ENCODE measurements at regions of chr10 and their contacts with region 1.

Region 1: DNA sequence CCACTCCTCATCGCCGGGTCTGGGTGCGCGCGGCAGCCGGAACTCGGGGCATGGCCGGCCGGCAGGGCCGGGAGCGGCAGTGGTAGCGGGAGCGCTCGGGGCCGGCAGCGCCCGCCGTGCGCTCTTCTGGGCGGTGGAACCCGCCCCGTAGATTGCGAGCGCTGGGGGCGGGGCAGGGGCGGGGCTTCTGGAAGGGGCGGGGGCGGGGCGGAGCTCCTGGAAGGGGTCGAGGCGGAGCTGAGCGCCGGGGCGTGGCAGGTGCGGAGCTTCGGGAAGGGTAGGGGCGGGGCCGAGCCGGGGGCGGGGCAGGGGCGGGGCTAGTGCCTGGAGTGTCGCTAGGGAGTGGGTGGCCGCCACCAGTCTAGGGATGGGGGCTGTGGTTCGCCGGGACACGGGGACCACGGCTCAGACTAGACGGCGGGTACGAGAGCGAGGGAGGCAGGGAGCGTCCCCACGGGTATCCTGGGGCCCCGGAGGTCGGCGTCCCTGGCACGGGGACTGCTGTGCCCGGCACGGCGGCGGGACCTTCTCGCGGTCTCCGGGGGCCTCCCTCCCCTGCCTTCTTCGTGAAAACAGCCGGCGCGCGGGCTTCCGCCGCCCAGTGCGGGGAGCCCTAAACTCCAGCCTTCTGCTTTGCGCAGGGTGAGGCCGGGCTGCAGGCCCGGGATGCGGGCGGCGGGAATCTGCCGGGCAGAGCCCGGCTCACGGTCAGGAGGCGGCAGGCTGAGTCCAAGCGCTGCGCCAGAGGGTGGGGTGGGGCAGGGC is at the start of gene STK32C:
- DNase-seq: peak; percentile 82 to 94 (median 90)
- ATAC-seq: peak; percentile 90
- H3K4me3 ChIP-seq: peak within 1 kb of the TSS; percentile 65 to 74
- H3K4me3 Mint-ChIP-seq: peak within 1 kb of the TSS; percentile 87
- H3K27ac ChIP-seq: peak within 1 kb of the TSS; percentile 43 to 50
- H3K27ac Mint-ChIP-seq: peak within 1 kb of the TSS; percentile 60
- H3K4me1 ChIP-seq: peaks cover 13% of the 10 kb centered on the region
- H3K4me1 Mint-ChIP-seq: peaks cover 17% of the 10 kb centered on the region
- H3K27me3 ChIP-seq: peaks cover 0 to 2% of the 10 kb centered on the region in 2 experiments
- H3K27me3 Mint-ChIP-seq: no peaks in the 10 kb centered on the region
- CTCF ChIP-seq: no peak
- total RNA-seq, gene STK32C: 5.0 to 5.4 TPM

Region 2: DNA sequence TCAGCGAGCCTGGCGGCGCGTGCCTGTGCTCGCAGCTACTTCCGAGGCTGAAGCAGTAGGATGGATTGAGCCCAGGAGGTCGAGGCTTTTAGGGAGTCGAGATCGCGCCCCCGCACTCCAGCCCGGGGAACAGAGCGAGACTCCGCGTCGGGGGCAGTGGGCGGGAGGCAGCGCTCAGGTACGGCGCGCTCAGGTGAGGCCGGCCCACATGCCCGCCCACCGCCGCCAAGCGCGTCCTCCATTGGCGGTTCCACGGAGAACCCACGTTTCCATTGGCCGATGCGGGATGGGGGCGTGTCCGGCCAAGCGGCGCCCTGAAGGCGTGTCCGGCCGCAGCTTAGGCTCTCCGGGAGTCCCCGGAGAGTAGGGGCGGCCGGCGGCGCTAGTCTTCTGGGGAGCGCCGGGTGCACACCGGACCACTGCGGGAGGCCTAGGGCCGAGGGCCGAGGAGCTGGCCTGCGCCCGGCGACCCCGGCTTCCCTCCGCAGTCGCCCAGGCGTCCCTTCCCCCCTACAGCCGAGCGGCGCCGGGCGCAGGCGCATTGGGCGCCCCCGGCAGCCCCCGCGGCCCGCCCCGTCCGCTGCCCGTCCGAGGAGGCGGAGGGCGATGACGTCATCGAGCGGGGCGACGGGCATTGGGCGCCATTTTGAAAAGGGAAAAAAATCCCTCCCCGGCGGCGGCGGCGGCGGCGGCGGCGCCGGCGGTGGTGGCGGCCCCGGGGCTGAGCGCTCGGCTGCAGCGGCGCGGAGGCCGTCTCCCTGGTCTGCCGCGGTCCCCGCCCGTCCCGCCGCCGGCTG is 407.5 kb before region 1 on chr10 and contains the start of gene PPP2R2D:
- CTCF ChIA-PET with region 1: no interaction called
- POLR2A ChIA-PET with region 1: no interaction called
- intact Hi-C with region 1: loop called in 1 of 2 experiments (anchors 5 kb)
- DNase-seq: peak; percentile 91 to 97 (median 95)
- ATAC-seq: peak; percentile 83
- H3K4me3 ChIP-seq: peak within 1 kb of the TSS; percentile 65 to 76
- H3K4me3 Mint-ChIP-seq: peak within 1 kb of the TSS; percentile 87
- H3K27ac ChIP-seq: peak within 1 kb of the TSS; percentile 73 to 79
- H3K27ac Mint-ChIP-seq: peak within 1 kb of the TSS; percentile 88
- H3K4me1 ChIP-seq: peaks cover 56% of the 10 kb centered on the region
- H3K4me1 Mint-ChIP-seq: peaks cover 52% of the 10 kb centered on the region
- H3K27me3 ChIP-seq: no peaks in the 10 kb centered on the region
- H3K27me3 Mint-ChIP-seq: no peaks in the 10 kb centered on the region
- CTCF ChIP-seq: no peak
- total RNA-seq, gene PPP2R2D: 28.4 to 28.5 TPM

Region 3: GRCh38 chr10:131961777-131962662 is 346.0 kb before region 1 on chr10:
- CTCF ChIA-PET with region 1: no interaction called
- POLR2A ChIA-PET with region 1: no interaction called
- intact Hi-C with region 1: no loop called
- DNase-seq: no peak
- ATAC-seq: no peak
- H3K4me3 ChIP-seq: no peak overlapping the region
- H3K4me3 Mint-ChIP-seq: no peak overlapping the region
- H3K27ac ChIP-seq: no peak overlapping the region
- H3K27ac Mint-ChIP-seq: no peak overlapping the region
- H3K4me1 ChIP-seq: peaks cover 18% of the 10 kb centered on the region
- H3K4me1 Mint-ChIP-seq: peaks cover 23% of the 10 kb centered on the region
- H3K27me3 ChIP-seq: no peaks in the 10 kb centered on the region
- H3K27me3 Mint-ChIP-seq: no peaks in the 10 kb centered on the region
- CTCF ChIP-seq: no peak

Region 4: DNA sequence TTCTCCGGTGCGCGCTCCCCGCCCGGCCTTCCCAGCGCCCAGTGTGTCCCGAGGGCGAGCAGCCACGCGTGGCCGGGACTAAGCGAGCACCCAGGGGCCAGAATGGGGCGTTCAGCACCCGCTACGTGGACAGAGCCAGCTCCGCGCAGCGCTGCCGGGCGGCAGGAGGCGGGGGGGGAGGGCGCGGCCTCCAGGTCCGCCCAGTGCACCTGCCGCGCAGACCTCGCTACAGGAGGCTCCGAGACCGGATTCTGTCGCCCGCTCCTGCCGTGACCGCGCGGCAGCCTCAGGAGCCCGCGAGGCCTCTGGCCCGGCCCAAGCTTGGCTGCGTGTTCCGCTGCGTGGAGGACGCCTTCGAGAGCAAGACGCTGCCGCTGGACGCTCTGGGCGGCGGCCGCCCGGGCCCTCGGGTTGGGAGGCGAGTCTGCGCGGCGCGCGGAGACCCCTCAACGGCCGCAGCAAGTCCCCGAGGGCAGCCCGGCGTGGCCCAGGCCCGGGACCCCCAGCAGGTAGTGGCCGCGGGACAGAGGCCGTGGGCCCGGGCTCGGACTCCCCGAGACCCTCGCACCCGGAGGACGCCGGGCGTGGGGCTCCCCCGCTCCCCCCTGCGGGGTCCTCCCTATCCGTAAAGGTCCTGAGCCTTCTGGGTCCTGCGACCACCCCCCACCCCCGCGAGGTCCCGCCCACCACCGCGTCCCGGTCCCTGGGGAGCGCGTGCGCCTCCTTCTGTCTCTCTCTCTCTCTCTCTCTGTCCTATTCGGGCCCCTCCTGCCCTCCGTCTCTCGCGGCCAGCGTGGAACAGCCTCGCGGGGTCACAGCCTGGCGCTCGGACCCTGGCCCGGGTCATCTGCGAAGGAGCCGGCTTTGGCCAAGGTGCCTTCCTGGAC is 122.2 kb before region 1 on chr10:
- CTCF ChIA-PET with region 1: no interaction called
- POLR2A ChIA-PET with region 1: no interaction called
- intact Hi-C with region 1: loop called in 1 of 2 experiments (anchors 1 kb)
- DNase-seq: peak; percentile 28 to 81 (median 59)
- ATAC-seq: peak; percentile 92
- H3K4me3 ChIP-seq: peak overlapping the region; percentile 32 to 39
- H3K4me3 Mint-ChIP-seq: no peak overlapping the region
- H3K27ac ChIP-seq: no peak overlapping the region
- H3K27ac Mint-ChIP-seq: no peak overlapping the region
- H3K4me1 ChIP-seq: peaks cover 17% of the 10 kb centered on the region
- H3K4me1 Mint-ChIP-seq: peaks cover 7% of the 10 kb centered on the region
- H3K27me3 ChIP-seq: peaks cover 10 to 11% of the 10 kb centered on the region in 2 experiments
- H3K27me3 Mint-ChIP-seq: peaks cover 56% of the 10 kb centered on the region
- CTCF ChIP-seq: no peak

Region 5: GRCh38 chr10:132240156-132240555 is 67.8 kb before region 1 on chr10:
- CTCF ChIA-PET with region 1: no interaction called
- POLR2A ChIA-PET with region 1: no interaction called
- intact Hi-C with region 1: no loop called
- DNase-seq: no peak
- ATAC-seq: no peak
- H3K4me3 ChIP-seq: no peak overlapping the region
- H3K4me3 Mint-ChIP-seq: no peak overlapping the region
- H3K27ac ChIP-seq: no peak overlapping the region
- H3K27ac Mint-ChIP-seq: no peak overlapping the region
- H3K4me1 ChIP-seq: no peaks in the 10 kb centered on the region
- H3K4me1 Mint-ChIP-seq: peaks cover 3% of the 10 kb centered on the region
- H3K27me3 ChIP-seq: no peaks in the 10 kb centered on the region
- H3K27me3 Mint-ChIP-seq: no peaks in the 10 kb centered on the region
- CTCF ChIP-seq: no peak

Region 6: GRCh38 chr10:132331526-132332432 is 23.8 kb after region 1 on chr10 and contains the start of gene LRRC27:
- CTCF ChIA-PET with region 1: no interaction called
- POLR2A ChIA-PET with region 1: no interaction called
- intact Hi-C with region 1: loop called (anchors 1 kb)
- DNase-seq: peak; percentile 99 to 100 (median 100)
- ATAC-seq: peak; percentile 90
- H3K4me3 ChIP-seq: peak within 1 kb of the TSS; percentile 77 to 90
- H3K4me3 Mint-ChIP-seq: peak within 1 kb of the TSS; percentile 84
- H3K27ac ChIP-seq: peak within 1 kb of the TSS; percentile 68 to 83
- H3K27ac Mint-ChIP-seq: peak within 1 kb of the TSS; percentile 91
- H3K4me1 ChIP-seq: peaks cover 31% of the 10 kb centered on the region
- H3K4me1 Mint-ChIP-seq: peaks cover 58% of the 10 kb centered on the region
- H3K27me3 ChIP-seq: no peaks in the 10 kb centered on the region
- H3K27me3 Mint-ChIP-seq: no peaks in the 10 kb centered on the region
- CTCF ChIP-seq: no peak
- total RNA-seq, gene LRRC27: 0.68 to 3.2 TPM

Region 7: DNA sequence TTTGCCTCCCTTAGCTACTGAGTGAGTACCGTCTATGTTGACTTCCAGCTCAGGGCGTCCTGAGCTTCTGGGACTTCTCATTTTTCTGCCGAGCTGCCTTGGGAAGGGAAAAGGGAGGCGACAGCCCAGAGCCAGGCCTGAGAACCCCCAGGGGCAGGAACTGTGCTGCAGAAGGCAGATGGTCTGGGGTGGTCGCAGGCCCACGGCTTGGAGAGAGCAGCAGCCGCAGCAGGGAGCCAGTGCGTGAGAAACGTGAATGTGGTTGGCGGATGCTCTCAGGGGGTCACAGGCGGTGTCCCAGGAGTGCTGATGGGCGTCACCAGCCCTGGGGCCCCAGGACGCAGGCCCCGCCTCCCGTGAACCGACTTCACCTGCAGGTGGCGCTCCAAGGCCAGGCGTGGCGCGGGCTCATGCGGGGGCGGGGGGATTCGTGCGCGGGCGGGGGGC is 79.8 kb after region 1 on chr10:
- CTCF ChIA-PET with region 1: no interaction called
- POLR2A ChIA-PET with region 1: no interaction called
- intact Hi-C with region 1: loop called in 1 of 2 experiments (anchors 2 kb)
- DNase-seq: peak; percentile 66 to 89 (median 81)
- ATAC-seq: peak; percentile 94
- H3K4me3 ChIP-seq: peak overlapping the region in 1 of 2 experiments; percentile 18
- H3K4me3 Mint-ChIP-seq: peak overlapping the region; percentile 71
- H3K27ac ChIP-seq: no peak overlapping the region
- H3K27ac Mint-ChIP-seq: peak overlapping the region; percentile 64
- H3K4me1 ChIP-seq: peaks cover 5% of the 10 kb centered on the region
- H3K4me1 Mint-ChIP-seq: peaks cover 3% of the 10 kb centered on the region
- H3K27me3 ChIP-seq: no peaks in the 10 kb centered on the region
- H3K27me3 Mint-ChIP-seq: no peaks in the 10 kb centered on the region
- CTCF ChIP-seq: peak; percentile 44

Region 8: GRCh38 chr10:132446661-132447194 is 138.7 kb after region 1 on chr10:
- CTCF ChIA-PET with region 1: interaction called, 3 read pairs
- POLR2A ChIA-PET with region 1: no interaction called
- intact Hi-C with region 1: loop called in 1 of 2 experiments (anchors 5 kb)
- DNase-seq: peak; percentile 31 to 89 (median 73)
- ATAC-seq: peak; percentile 36
- H3K4me3 ChIP-seq: peak overlapping the region; percentile 43 to 53
- H3K4me3 Mint-ChIP-seq: peak overlapping the region; percentile 71
- H3K27ac ChIP-seq: peak overlapping the region; percentile 87 to 99
- H3K27ac Mint-ChIP-seq: peak overlapping the region; percentile 98
- H3K4me1 ChIP-seq: peaks cover 58% of the 10 kb centered on the region
- H3K4me1 Mint-ChIP-seq: peaks cover 52% of the 10 kb centered on the region
- H3K27me3 ChIP-seq: no peaks in the 10 kb centered on the region
- H3K27me3 Mint-ChIP-seq: no peaks in the 10 kb centered on the region
- CTCF ChIP-seq: peak; percentile 30

Region 9: GRCh38 chr10:132606536-132607316 is 298.7 kb after region 1 on chr10:
- CTCF ChIA-PET with region 1: no interaction called
- POLR2A ChIA-PET with region 1: no interaction called
- intact Hi-C with region 1: no loop called
- DNase-seq: no peak
- ATAC-seq: no peak
- H3K4me3 ChIP-seq: no peak overlapping the region
- H3K4me3 Mint-ChIP-seq: no peak overlapping the region
- H3K27ac ChIP-seq: no peak overlapping the region
- H3K27ac Mint-ChIP-seq: no peak overlapping the region
- H3K4me1 ChIP-seq: peaks cover 6% of the 10 kb centered on the region
- H3K4me1 Mint-ChIP-seq: peaks cover 29% of the 10 kb centered on the region
- H3K27me3 ChIP-seq: no peaks in the 10 kb centered on the region
- H3K27me3 Mint-ChIP-seq: no peaks in the 10 kb centered on the region
- CTCF ChIP-seq: no peak

Region 10: GRCh38 chr10:133261726-133262325 is 953.8 kb after region 1 on chr10:
- CTCF ChIA-PET with region 1: no interaction called
- POLR2A ChIA-PET with region 1: no interaction called
- intact Hi-C with region 1: loop called in 1 of 2 experiments (anchors 10 kb)
- DNase-seq: peak; percentile 73 to 89 (median 82)
- ATAC-seq: peak; percentile 29
- H3K4me3 ChIP-seq: peak overlapping the region; percentile 61 to 68
- H3K4me3 Mint-ChIP-seq: peak overlapping the region; percentile 82
- H3K27ac ChIP-seq: peak overlapping the region; percentile 63 to 74
- H3K27ac Mint-ChIP-seq: peak overlapping the region; percentile 77
- H3K4me1 ChIP-seq: peaks cover 71% of the 10 kb centered on the region
- H3K4me1 Mint-ChIP-seq: peaks cover 66% of the 10 kb centered on the region
- H3K27me3 ChIP-seq: no peaks in the 10 kb centered on the region
- H3K27me3 Mint-ChIP-seq: no peaks in the 10 kb centered on the region
- CTCF ChIP-seq: no peak